HCT116 (cell line): ENCODE measurements at regions of chr19 and their contacts with region 1.

Region 1: DNA sequence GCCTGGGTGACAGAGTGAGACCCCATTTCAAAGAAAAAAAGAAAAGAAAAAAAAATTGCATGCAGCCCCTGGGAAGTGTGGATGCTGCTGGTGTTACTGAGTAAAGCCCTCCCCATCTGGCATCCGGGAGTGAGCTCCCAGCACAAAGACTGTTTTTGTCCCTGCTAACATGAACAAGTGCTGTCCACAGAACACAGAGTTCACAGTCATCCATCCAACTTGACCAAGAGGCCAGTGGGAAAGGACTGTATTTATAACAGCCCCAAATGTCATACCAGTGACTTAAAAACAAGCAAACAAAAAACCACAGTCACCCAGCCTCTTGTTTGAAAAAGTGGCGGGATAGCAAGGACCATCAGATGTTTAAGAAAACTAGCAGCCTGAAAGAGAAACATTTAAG is 10.8 kb downstream of the FBXO17 start:
- DNase-seq: no peak
- ATAC-seq: no peak
- H3K4me3 ChIP-seq: no peak overlapping the region
- H3K27ac ChIP-seq: no peak overlapping the region
- H3K4me1 ChIP-seq: peaks cover 0 to 5% of the 10 kb centered on the region in 2 experiments; a peak in 3 of 4 replicates
- H3K27me3 ChIP-seq: no peaks in the 10 kb centered on the region
- CTCF ChIP-seq: no peak
- POLR2A ChIP-seq: no peak
- RAD21 ChIP-seq: no peak

Region 2: GRCh38 chr19:39052243-39052746 is 87.6 kb after region 1 on chr19:
- CTCF ChIA-PET with region 1: interaction called, 4 read pairs
- POLR2A ChIA-PET with region 1: no interaction called
- RAD21 ChIA-PET with region 1: no interaction called
- intact Hi-C with region 1: loop called (anchors 1 kb)
- DNase-seq: no peak
- ATAC-seq: peak; percentile 99
- H3K4me3 ChIP-seq: no peak overlapping the region
- H3K27ac ChIP-seq: no peak overlapping the region
- H3K4me1 ChIP-seq: peaks cover 0 to 14% of the 10 kb centered on the region in 2 experiments; a peak in 1 of 4 replicates
- H3K27me3 ChIP-seq: no peaks in the 10 kb centered on the region
- CTCF ChIP-seq: peak; percentile 84 to 94 (median 92); a peak in 5 of 6 replicates
- POLR2A ChIP-seq: no peak
- RAD21 ChIP-seq: peak; percentile 95

Region 3: DNA sequence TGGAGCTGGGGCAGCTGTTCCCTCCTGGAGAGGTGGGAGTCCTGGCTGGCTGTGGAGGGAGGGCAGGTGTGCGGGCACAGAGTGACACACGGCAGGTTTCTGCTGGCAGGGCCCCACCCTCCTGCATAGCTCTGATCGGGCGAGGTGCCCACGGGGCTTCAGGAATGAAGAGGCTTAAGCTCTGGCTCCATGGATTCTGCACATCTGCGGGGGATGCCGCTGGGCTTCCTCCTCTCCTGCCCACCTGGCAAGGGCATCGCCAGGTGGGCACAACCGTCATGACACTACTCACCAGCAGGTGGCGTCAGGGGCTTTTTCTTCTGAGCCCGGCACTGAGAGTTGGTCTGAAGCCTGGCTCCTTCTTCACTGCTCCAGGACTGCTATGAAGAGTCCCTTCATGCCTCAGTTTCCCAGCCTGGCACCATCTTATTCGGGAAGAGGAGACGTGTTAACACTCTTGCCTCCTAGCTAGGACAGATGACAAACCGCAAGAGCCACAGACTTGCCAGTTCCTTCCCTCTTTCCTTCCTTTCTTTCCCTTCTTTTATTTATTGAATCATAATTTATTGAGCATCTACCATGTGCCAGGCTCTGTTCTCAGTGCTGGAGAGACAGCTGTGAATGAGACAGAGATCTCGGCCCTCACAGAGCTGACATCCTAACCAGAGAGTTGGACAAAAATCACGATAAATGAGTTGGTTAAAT is 145.7 kb after region 1 on chr19:
- CTCF ChIA-PET with region 1: interaction called, 3 read pairs
- POLR2A ChIA-PET with region 1: no interaction called
- RAD21 ChIA-PET with region 1: no interaction called
- intact Hi-C with region 1: loop called (anchors 5 kb)
- DNase-seq: peak; percentile 41
- ATAC-seq: peak; percentile 78
- H3K4me3 ChIP-seq: no peak overlapping the region
- H3K27ac ChIP-seq: no peak overlapping the region
- H3K4me1 ChIP-seq: peaks cover 17 to 29% of the 10 kb centered on the region in 2 experiments
- H3K27me3 ChIP-seq: no peaks in the 10 kb centered on the region
- CTCF ChIP-seq: peak; percentile 55 to 87 (median 80)
- POLR2A ChIP-seq: no peak
- RAD21 ChIP-seq: peak; percentile 75

Region 4: DNA sequence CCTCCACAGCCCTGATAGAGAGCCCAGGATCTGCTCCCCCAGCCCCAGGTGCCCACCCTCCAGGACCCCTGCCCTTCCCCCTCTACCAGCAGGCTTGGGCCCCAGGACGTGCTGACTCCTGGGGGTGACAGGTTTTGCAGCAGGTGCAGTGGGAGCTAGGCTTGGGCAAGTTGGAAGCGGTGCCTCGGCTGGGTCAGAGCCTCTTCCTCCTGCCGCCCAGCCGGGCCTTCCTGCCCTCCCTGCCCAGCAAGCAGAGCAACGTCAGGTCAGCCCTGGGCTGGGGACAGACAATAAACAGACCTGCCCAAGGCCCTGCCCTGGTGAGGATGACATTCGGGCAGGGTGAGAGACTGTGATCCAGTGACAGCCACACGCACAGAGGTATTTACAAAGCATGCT is 222.8 kb after region 1 on chr19:
- CTCF ChIA-PET with region 1: no interaction called
- POLR2A ChIA-PET with region 1: no interaction called
- RAD21 ChIA-PET with region 1: no interaction called
- intact Hi-C with region 1: loop called (anchors 5 kb)
- DNase-seq: no peak
- ATAC-seq: peak; percentile 35; the same call in 1 of the 2 replicates
- H3K4me3 ChIP-seq: no peak overlapping the region
- H3K27ac ChIP-seq: no peak overlapping the region
- H3K4me1 ChIP-seq: peaks cover 0 to 6% of the 10 kb centered on the region in 2 experiments; a peak in 1 of 4 replicates
- H3K27me3 ChIP-seq: no peaks in the 10 kb centered on the region
- CTCF ChIP-seq: no peak
- POLR2A ChIP-seq: no peak
- RAD21 ChIP-seq: no peak

Region 5: GRCh38 chr19:39328046-39328705 is 363.4 kb after region 1 on chr19:
- CTCF ChIA-PET with region 1: interaction called, 5 read pairs
- POLR2A ChIA-PET with region 1: no interaction called
- RAD21 ChIA-PET with region 1: no interaction called
- intact Hi-C with region 1: loop called (anchors 5 kb)
- DNase-seq: no peak
- ATAC-seq: peak; percentile 83
- H3K4me3 ChIP-seq: no peak overlapping the region
- H3K27ac ChIP-seq: no peak overlapping the region
- H3K4me1 ChIP-seq: peaks cover 0 to 12% of the 10 kb centered on the region in 2 experiments; a peak in 1 of 4 replicates
- H3K27me3 ChIP-seq: no peaks in the 10 kb centered on the region
- CTCF ChIP-seq: peak; percentile 95 to 98 (median 96)
- POLR2A ChIP-seq: no peak
- RAD21 ChIP-seq: peak; percentile 97